Right cardiac atrium (tissue), 5 donors: ENCODE measurements at regions of chr2 and their contacts with region 1.

Region 1: DNA sequence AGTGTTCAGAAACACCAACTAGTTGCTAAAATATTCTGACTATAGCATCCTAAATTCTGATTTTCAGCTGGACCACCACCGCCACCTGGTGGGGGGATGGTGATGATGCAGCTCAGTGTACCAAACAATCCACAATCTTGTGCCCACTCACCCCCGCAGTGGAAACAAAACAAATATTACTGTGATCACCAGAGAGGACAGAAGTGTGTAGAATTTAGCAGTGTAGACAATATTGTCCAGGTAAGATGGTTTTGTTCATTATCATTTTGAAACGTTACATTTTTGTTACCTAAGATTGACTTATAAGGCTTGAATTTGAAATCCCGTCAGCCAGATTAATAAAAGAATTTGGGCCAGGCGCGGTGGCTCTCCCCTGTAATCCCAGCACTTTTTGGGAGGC is 31.7 kb upstream of the UBXN4 start:
- DNase-seq: peak; percentile 39 to 78 (median 70)
- ATAC-seq: peak; percentile 32 to 61
- H3K4me3 ChIP-seq: no peak overlapping the region
- H3K27ac ChIP-seq: no peak overlapping the region
- H3K4me1 ChIP-seq: no peaks in the 10 kb centered on the region
- H3K27me3 ChIP-seq: no peaks in the 10 kb centered on the region

Region 2: DNA sequence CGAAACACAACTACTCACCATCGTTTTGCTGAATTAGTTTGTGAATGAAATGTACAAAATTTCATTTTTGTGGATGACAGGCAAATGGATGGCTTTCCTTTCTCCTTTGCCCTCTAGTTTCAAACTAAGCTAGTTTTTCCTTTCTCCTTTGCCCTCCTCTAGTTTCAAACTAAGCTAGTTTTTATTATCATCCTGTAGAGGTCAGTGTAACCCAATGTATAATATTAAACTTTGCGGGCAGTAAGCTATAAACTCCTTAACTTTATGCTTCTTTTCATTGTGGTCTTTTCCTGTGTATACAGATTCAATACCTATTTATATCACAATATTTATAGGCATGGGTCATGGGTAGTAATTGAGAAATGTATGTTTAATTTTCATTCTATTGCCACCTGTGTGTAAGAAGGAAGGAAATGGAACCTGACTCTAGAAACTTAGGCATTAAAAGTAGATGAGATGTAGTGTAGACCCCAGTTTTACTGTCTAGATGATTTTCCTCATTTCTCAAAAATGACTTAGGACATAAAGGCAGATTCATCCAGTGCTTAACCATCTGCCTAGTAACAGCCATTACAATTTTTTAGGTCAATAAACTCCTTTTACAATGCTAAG is 720.9 kb before region 1 on chr2:
- intact Hi-C with region 1: loop called (anchors 5 to 10 kb)
- DNase-seq: no peak
- ATAC-seq: peak in 1 of 2 donors; percentile 40
- H3K4me3 ChIP-seq: no peak overlapping the region
- H3K27ac ChIP-seq: no peak overlapping the region
- H3K4me1 ChIP-seq: no peaks in the 10 kb centered on the region
- H3K27me3 ChIP-seq: no peaks in the 10 kb centered on the region

Region 3: GRCh38 chr2:135815269-135815668 is 105.3 kb after region 1 on chr2:
- intact Hi-C with region 1: no loop called
- DNase-seq: no peak
- ATAC-seq: no peak
- H3K4me3 ChIP-seq: no peak overlapping the region
- H3K27ac ChIP-seq: no peak overlapping the region
- H3K4me1 ChIP-seq: no peaks in the 10 kb centered on the region
- H3K27me3 ChIP-seq: no peaks in the 10 kb centered on the region

Region 4: DNA sequence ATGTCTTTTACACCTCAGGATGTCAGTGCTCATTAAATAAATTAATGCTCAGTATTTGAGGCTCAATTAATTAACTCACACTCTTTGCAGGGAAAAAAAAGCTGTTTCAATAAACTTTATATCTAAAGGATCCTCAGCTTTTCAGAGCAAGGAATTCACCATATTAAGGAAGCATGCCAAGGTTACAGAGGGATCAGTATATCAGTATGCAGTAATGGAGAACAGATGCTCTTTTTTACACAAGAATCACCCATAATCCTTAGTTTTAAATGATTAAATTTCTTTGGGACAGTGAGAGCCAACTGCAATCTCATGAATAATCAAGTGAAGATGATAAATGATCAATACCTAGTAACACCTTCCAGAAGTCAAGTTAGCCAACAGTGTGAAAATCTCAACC is 141.9 kb after region 1 on chr2:
- intact Hi-C with region 1: no loop called
- DNase-seq: no peak
- ATAC-seq: no peak
- H3K4me3 ChIP-seq: no peak overlapping the region
- H3K27ac ChIP-seq: no peak overlapping the region
- H3K4me1 ChIP-seq: no peaks in the 10 kb centered on the region
- H3K27me3 ChIP-seq: no peaks in the 10 kb centered on the region

Region 5: GRCh38 chr2:135890835-135891234 is 180.8 kb after region 1 on chr2:
- intact Hi-C with region 1: no loop called
- DNase-seq: no peak
- ATAC-seq: peak in 1 of 2 donors; percentile 18
- H3K4me3 ChIP-seq: no peak overlapping the region
- H3K27ac ChIP-seq: no peak overlapping the region
- H3K4me1 ChIP-seq: no peaks in the 10 kb centered on the region
- H3K27me3 ChIP-seq: no peaks in the 10 kb centered on the region

Region 6: DNA sequence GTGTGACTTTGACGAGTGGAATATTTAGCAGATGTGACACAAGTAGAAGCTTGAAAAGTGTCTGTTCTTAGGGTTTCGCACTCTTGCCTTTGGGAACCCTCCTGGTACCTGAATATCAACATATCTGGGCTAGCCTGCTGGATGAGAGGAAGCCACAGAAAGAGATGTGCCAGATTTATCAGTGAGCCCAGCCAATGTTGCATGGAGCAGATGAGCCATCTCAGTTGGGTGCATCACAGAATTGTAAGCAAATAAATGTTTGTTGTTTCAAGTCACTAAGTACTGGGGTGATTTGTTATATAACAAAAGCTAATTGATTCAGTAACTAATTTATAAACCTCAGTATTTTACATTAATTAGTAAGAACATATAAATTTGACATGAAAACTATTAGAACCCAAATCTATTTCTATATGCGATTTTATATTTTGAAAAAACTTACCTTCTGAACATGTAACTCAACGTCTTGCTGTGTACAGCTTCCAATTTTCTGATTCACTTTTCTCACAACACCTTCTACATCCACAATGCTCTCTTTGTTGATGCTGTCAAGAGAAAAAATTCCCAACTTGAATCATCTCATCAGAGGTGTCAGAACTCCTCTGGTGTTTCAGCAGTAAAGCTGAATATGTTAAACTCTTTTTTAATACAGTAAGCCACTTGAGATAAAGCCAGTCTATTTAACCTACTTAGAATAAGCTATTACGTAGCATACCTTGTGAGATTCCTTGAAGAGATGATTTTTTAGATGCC is 233.1 kb after region 1 on chr2:
- intact Hi-C with region 1: no loop called
- DNase-seq: no peak
- ATAC-seq: no peak
- H3K4me3 ChIP-seq: no peak overlapping the region
- H3K27ac ChIP-seq: no peak overlapping the region
- H3K4me1 ChIP-seq: no peaks in the 10 kb centered on the region
- H3K27me3 ChIP-seq: no peaks in the 10 kb centered on the region